ENCODE measurements at regions of chr2 and their contacts with region 1.

Region 1: GRCh38 chr2:173134703-173135102 is 59.1 kb downstream of the MAP3K20 start:
- DNase-seq: no peak
- H3K4me3 Mint-ChIP-seq: peak overlapping the region; percentile 58
- H3K27ac Mint-ChIP-seq: peak overlapping the region; percentile 76
- H3K4me1 Mint-ChIP-seq: peaks cover 76% of the 10 kb centered on the region
- H3K27me3 Mint-ChIP-seq: peaks cover 21% of the 10 kb centered on the region

Region 2: GRCh38 chr2:172762574-172762973 is 372.1 kb before region 1 on chr2:
- intact Hi-C with region 1: no loop called
- DNase-seq: no peak
- H3K4me3 Mint-ChIP-seq: no peak overlapping the region
- H3K27ac Mint-ChIP-seq: no peak overlapping the region
- H3K4me1 Mint-ChIP-seq: no peaks in the 10 kb centered on the region
- H3K27me3 Mint-ChIP-seq: peaks cover 4% of the 10 kb centered on the region

Region 3: GRCh38 chr2:173048897-173049661 is 85.6 kb before region 1 on chr2:
- intact Hi-C with region 1: loop called (anchors 1 kb)
- DNase-seq: no peak
- H3K4me3 Mint-ChIP-seq: no peak overlapping the region
- H3K27ac Mint-ChIP-seq: peak overlapping the region; percentile 59
- H3K4me1 Mint-ChIP-seq: peaks cover 18% of the 10 kb centered on the region
- H3K27me3 Mint-ChIP-seq: peaks cover 19% of the 10 kb centered on the region

Region 4: DNA sequence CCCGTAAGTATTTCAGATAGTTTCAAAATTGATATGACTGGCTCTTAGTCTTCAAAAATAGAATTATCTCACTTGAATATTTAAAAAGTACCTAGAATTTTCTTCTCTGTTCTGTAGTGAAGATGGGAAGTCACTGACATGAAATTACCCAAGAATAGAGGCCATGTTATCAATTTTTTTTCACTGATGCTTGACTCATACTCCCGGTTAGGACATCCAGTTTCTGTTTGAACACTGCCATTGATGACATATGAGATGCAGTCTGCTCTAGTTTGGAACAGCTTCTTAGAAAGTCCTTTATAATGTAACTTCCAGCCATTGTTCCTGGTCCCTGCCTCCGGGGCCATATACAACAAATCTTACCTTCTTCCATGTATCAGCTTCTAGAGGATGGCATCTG is 33.0 kb before region 1 on chr2:
- intact Hi-C with region 1: loop called (anchors 1 kb)
- DNase-seq: no peak
- H3K4me3 Mint-ChIP-seq: no peak overlapping the region
- H3K27ac Mint-ChIP-seq: peak overlapping the region; percentile 4
- H3K4me1 Mint-ChIP-seq: peaks cover 31% of the 10 kb centered on the region
- H3K27me3 Mint-ChIP-seq: no peaks in the 10 kb centered on the region

Region 5: DNA sequence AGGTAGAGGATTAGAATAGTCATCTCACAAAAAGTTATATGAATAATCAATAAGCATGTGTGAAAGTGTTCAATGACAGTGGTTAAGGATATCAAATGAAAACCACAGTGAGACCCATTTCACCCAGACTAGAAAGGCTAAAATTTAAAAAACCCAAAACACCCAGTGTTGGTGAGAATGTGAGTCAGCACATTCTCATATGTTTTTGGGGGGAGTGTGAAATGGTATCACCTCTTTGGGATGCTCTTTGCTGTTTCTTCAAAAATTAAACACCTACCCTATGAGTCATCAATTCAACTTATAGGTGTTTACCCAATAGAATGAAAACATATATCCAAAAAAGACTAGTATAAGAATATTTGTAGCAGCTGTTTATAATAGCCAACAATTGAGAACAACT is 10.8 kb after region 1 on chr2:
- intact Hi-C with region 1: loop called (anchors 1 kb)
- DNase-seq: no peak
- H3K4me3 Mint-ChIP-seq: no peak overlapping the region
- H3K27ac Mint-ChIP-seq: no peak overlapping the region
- H3K4me1 Mint-ChIP-seq: peaks cover 54% of the 10 kb centered on the region
- H3K27me3 Mint-ChIP-seq: peaks cover 6% of the 10 kb centered on the region

Region 6: DNA sequence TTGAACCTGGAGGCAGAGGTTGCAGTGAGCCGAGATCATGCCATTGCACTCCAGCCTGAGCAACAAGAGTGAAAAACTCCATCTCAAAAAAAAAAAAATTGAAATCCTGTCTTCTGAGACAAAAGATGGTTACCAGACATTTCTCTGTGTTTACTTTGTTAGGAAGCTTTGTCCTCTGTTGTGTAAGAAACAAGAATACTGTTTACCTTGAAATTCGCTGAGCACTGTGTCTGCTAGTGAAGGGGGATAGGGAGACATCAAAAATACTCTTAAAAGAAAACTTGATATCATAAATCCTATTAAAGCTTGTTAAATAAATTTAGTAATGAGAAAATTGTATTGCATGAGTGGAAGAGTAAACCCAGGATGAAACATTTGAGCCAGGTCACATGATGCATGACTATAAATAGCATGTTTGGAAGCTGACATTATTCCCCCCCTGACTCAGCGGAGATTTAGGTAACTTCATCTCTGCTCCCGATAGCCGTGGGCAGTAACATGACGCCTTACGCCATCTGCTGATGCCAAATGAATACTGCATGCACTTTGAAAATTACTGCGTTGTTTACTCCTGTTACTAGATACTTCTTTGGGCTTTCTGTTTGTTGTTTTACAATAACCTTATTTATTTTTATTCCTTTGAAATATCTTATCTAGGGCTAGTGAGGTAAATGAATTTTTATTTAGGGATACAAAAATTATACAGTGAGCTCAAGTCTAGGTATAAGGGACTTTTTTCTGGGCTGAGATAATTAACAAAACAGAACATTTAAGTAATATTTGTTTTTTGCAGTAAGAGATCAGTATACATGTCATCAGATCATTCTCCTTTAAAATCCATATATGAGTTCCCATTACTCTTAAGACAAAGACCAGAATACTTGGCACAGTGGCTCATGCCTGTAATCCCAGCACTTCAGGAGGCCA is 75.8 kb after region 1 on chr2:
- intact Hi-C with region 1: loop called (anchors 1 kb)
- DNase-seq: peak; percentile 41
- H3K4me3 Mint-ChIP-seq: no peak overlapping the region
- H3K27ac Mint-ChIP-seq: no peak overlapping the region
- H3K4me1 Mint-ChIP-seq: peaks cover 6% of the 10 kb centered on the region
- H3K27me3 Mint-ChIP-seq: no peaks in the 10 kb centered on the region

Region 7: DNA sequence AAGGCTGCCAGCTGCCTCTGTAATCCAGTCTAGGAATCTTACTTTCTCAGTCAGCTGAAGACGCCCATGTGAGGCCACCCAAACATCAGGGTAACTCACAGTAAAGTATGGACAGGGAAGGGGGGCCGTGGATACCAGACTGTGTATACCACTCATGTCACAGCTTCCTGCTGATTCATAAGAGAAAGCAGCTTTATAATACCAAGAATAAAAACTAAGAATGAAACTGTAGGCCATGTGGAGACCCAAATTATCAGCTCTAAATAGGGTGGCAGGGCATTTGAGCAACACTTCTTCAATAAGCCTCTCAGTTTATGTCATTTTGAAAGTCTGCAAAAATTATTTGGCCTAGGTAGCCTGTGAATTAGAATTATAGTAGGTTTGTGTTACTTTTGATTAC is 104.9 kb after region 1 on chr2:
- intact Hi-C with region 1: loop called (anchors 1 kb)
- DNase-seq: peak; percentile 6
- H3K4me3 Mint-ChIP-seq: no peak overlapping the region
- H3K27ac Mint-ChIP-seq: no peak overlapping the region
- H3K4me1 Mint-ChIP-seq: peaks cover 11% of the 10 kb centered on the region
- H3K27me3 Mint-ChIP-seq: no peaks in the 10 kb centered on the region

Region 8: DNA sequence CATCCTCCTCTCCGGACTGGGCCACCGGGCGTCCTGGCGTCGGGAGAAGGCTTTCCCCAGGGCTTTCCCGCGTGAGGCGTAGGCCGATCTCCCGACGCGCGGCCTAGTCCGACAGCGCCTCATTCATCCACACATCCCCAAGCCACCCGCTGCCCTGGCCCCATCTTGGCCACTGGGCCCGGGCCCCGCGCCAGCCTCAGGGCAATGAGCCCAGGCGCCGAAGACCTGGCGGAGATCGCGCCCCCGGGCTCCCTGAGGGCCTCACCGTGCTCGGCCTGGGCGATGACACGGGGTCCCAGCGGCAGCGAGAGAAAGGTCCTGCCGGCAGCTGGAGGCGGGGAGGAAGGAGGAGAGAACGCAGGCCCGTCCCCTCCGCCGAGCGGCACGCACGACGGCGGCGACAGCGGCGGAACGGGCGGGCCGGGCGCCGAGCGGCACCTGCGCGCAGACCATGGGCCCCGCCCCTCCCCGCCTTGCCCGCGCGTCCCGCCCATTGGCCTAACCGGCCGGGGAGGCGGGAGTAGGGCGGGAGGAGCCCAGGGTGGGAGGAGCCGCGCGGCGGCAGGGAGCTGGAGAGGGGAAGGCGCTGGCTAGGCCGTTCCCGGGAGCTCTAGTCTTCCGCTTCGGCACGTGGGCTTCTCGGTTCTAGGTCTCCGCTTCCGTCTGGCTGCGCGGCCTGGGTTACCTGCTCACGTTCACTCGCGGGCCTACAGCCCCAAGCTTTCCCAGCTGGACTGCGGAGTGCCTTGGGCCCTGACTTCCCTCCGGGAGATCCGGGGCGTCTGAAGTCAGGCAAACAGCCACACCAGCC is 1113.7 kb after region 1 on chr2 and contains the start of gene OLA1:
- intact Hi-C with region 1: loop called (anchors 5 kb)
- DNase-seq: peak; percentile 95
- H3K4me3 Mint-ChIP-seq: peak within 1 kb of the TSS; percentile 83
- H3K27ac Mint-ChIP-seq: peak within 1 kb of the TSS; percentile 79
- H3K4me1 Mint-ChIP-seq: peaks cover 26% of the 10 kb centered on the region
- H3K27me3 Mint-ChIP-seq: no peaks in the 10 kb centered on the region
- total RNA-seq, gene OLA1: 132 and 139 TPM in 2 replicates

Measured in activated T-helper 1 cell treated with anti-CD3 and anti-CD28 coated beads, Interleukin-12 subunit alpha, Interleukin-12 subunit beta, Interleukin-2, Interleukin-4 antibody, amounts not matched to agents 30 ng/mL and 10 ng/mL and 1 ng/mL, durations not matched to agents 14 hours and 24 hours and 36 hours (primary cell).